Right ventricle myocardium superior (tissue), 1 donor: ENCODE measurements at regions of chr22 and their contacts with region 1.

Region 1: GRCh38 chr22:31399211-31400028 is at the start of gene DRG1:
- DNase-seq: peak; percentile 98
- ATAC-seq: peak; percentile 99
- total RNA-seq, gene DRG1: 60.6 TPM

Region 2: GRCh38 chr22:31345331-31346254 is 53.8 kb before region 1 on chr22:
- intact Hi-C with region 1: loop called (anchors 5 kb)
- DNase-seq: peak; percentile 91
- ATAC-seq: peak; percentile 80

Region 3: DNA sequence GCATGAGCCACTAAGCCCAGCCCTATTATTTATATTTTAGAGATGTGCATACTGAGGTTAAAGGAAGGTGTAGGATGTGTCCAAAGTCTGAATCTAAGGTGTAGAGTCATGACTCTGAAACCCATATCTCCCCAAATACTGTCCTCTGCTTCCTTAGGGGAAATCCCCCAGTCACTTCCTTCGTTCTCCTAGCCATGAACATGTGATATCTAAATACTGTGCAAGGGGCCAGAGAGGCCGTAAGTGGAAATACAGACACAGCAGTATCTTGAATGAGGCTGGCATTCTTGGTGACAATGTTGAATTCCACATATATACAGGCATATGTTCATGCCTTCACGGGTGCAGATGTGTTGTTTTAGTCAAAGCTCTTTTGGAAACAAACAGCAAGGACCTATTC is 32.0 kb before region 1 on chr22:
- intact Hi-C with region 1: no loop called
- DNase-seq: no peak
- ATAC-seq: no peak

Region 4: DNA sequence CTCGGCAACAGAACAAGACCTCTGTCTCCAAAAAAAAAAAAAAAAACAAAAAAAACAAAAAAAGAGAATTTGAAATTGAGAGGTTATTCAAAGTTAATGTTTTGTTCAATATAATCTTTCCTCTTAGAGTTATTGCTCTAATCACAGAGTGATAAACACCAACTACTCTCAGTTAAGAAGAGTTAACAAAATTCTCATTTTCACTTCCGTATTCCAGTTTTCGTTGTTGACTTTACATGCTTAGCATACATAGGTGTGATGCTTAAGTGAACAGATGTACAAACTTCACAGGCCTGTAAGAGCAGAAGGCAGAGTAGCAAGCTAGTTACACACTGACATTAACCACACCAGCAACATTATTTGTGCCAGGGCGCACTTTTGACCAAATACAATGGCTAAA is 77.9 kb after region 1 on chr22:
- intact Hi-C with region 1: no loop called
- DNase-seq: no peak
- ATAC-seq: no peak

Region 5: DNA sequence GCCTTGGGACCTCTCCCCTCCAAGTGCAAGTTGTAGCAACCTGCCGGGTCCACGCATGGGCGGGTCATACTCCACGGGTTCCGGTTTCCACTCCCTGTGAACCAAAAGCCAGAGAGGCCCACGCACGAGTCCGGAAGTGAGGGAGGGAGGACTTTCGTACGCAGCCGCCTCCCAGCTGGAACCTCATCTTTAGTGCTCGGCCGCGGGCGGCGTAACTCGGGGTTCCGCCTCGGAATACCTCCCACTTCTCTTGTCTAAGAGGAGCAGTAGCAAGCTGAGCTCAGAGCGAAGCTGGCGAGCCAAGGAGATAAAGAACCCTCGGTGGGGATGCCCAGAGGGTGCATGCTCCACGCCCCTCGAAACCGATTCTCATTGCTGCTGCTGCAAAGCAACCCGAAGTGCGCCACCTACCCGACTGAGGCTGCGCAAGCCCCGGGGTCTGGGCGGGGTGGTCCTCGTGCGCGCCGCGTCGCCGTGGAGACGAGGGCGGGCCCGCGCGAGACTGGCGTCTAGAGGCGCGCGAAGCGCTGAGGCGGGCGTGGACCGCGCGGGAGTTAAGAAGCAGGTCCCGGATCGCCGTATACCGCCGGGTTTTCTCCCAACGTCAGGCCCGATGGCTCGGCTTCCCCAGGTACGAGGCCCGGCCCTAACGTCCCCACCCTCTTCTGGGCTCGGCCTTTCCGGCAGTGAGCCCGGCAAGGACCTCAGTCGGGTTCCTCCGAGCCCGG is 96.8 kb after region 1 on chr22 and contains the start of gene SFI1:
- intact Hi-C with region 1: loop called (anchors 2 kb)
- DNase-seq: peak; percentile 96
- ATAC-seq: peak; percentile 99
- total RNA-seq, gene SFI1: 5.7 TPM